Heart right ventricle (tissue), 16 donors: ENCODE measurements at regions of chr10 and their contacts with region 1.

Region 1: DNA sequence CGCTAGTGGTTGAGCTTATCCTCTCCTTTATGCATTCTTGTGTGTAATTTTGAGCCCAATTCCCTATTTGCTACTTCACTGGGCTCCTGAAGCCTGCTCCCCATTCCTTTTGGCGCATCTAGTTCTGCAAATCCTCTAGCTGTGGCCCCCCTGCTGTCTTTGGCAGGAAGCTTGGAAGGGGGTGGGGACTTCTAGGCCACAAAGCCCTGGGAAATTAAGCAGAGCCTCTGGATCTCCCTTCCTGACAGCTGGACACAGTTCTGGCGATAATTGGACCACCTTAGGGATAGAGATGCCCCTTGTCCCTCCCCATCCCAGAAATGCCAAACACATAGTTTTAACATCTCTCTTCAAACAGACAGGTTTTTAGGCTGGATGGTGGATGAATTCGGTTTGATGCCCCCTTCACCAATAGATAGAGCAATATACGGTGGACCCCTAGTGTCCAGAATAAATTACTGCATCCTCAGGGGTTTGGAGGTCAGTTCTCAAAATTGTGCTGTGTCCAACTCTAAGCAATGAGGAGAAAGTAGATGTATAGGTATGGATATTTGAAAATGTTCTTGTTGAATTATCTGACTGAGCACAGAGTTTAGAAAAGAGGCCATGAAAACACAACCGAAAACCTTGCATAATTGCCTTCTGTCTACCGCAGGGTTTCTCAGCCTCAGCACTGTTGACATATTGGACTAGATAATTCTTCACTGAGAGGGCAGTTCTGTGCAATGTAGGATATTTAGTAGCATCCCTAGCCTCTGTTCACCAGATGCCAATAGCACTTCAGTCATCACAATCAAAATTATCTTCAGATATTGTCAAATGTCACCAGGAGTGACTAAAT is 75.5 kb downstream of the PAPSS2 start:
- DNase-seq: peak in 1 of 2 donors; percentile 35
- ATAC-seq: peak; percentile 55 to 87 (median 85)
- H3K4me3 ChIP-seq: peak overlapping the region in 2 of 10 donors; percentile 12 to 21
- H3K27ac ChIP-seq: peak overlapping the region in 2 of 10 donors; percentile 29 to 30
- H3K4me1 ChIP-seq: peaks cover 0 to 20% (median 6%) of the 10 kb centered on the region in 9 donors
- H3K27me3 ChIP-seq: no peaks in the 10 kb centered on the region
- CTCF ChIP-seq: peak; percentile 74 to 86 (median 82)

Region 2: GRCh38 chr10:87531908-87532622 is 203.1 kb before region 1 on chr10:
- intact Hi-C with region 1: loop called in 7 of 10 experiments (anchors 5 to 10 kb)
- DNase-seq: no peak
- ATAC-seq: peak in 7 of 8 donors; percentile 44 to 85 (median 72)
- H3K4me3 ChIP-seq: peak overlapping the region in 1 of 10 donors; percentile 3
- H3K27ac ChIP-seq: peak overlapping the region; percentile 6 to 73 (median 58)
- H3K4me1 ChIP-seq: peaks cover 0 to 29% (median 18%) of the 10 kb centered on the region in 9 donors
- H3K27me3 ChIP-seq: no peaks in the 10 kb centered on the region
- CTCF ChIP-seq: no peak

Region 3: GRCh38 chr10:87547734-87548311 is 187.4 kb before region 1 on chr10:
- intact Hi-C with region 1: loop called in 1 of 10 experiments (anchors 10 kb)
- DNase-seq: no peak
- ATAC-seq: no peak
- H3K4me3 ChIP-seq: no peak overlapping the region
- H3K27ac ChIP-seq: peak overlapping the region in 1 of 10 donors; percentile 17
- H3K4me1 ChIP-seq: peaks cover 0 to 44% (median 0%) of the 10 kb centered on the region in 9 donors
- H3K27me3 ChIP-seq: no peaks in the 10 kb centered on the region
- CTCF ChIP-seq: no peak

Region 4: GRCh38 chr10:87654212-87654611 is 81.0 kb before region 1 on chr10:
- intact Hi-C with region 1: loop called (anchors 1 to 5 kb)
- DNase-seq: no peak
- ATAC-seq: no peak
- H3K4me3 ChIP-seq: no peak overlapping the region
- H3K27ac ChIP-seq: no peak overlapping the region
- H3K4me1 ChIP-seq: peaks cover 0 to 18% (median 5%) of the 10 kb centered on the region in 9 donors
- H3K27me3 ChIP-seq: peaks cover 0 to 7% (median 0%) of the 10 kb centered on the region in 7 donors
- CTCF ChIP-seq: no peak

Region 5: GRCh38 chr10:87750001-87750671 is 14.9 kb after region 1 on chr10:
- intact Hi-C with region 1: no loop called
- DNase-seq: no peak
- ATAC-seq: peak in 2 of 8 donors; percentile 22 to 31
- H3K4me3 ChIP-seq: no peak overlapping the region
- H3K27ac ChIP-seq: no peak overlapping the region
- H3K4me1 ChIP-seq: peaks cover 0 to 8% (median 0%) of the 10 kb centered on the region in 9 donors
- H3K27me3 ChIP-seq: no peaks in the 10 kb centered on the region
- CTCF ChIP-seq: no peak